HepG2 (cell line): ENCODE measurements at regions of chr5 and their contacts with region 1.

Region 1: DNA sequence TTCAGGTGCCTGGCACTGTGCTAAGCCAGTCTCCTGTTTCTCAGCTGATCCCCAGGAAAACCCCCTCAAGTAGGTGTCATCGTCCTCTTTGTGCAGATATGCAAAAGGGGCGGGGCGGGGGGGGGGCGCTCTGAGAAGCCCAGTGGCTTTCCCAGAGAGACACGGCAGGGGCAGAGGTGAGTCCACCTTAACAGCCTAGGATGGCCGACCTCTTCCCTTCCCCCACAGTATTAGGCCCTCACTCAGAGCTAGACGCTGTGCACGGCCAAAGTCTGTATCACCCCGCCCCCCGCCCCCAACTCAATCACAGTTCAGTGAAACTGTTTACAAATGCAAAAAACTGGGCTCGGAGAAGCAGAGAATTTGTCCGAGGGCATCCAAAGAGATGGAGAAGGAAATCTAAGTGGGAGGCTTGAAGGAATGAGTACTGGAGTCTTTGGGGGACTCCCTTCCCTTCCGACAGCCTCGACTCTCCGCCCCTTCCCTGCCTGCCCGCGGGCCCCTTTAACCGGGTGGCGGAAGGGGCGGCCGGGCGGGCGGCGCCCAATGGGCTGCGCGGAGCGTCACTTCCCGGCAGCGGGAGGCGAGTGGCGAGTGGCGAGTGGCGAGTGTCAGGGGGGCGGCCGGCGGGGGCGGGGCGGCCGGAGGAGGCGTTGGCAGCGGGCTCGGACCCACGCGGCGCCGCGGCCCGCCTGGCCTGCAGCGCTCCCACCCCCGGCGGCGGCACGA is at the start of gene ERGIC1:
- DNase-seq: peak; percentile 64
- ATAC-seq: peak; percentile 84
- H3K4me3 ChIP-seq: peak within 1 kb of the TSS; percentile 83 to 95 (median 86)
- H3K27ac ChIP-seq: peak within 1 kb of the TSS; percentile 90
- H3K4me1 ChIP-seq: peaks cover 71% of the 10 kb centered on the region
- H3K27me3 ChIP-seq: no peaks in the 10 kb centered on the region; a peak in 1 of 5 replicates
- CTCF ChIP-seq: no peak
- EP300 ChIP-seq: 0 out of 4 replicates have a peak, but pooled peaks have one; percentile 28 to 30
- POLR2A ChIP-seq: peak; percentile 76 to 88
- RAD21 ChIP-seq: peak; percentile 44
- total RNA-seq, gene ERGIC1: 56.6 and 78.5 TPM in 2 replicates

Region 2: GRCh38 chr5:172849606-172850453 is 16.0 kb after region 1 on chr5:
- CTCF ChIA-PET with region 1: no interaction called
- POLR2A ChIA-PET with region 1: interaction called, 7 read pairs
- in situ Hi-C with region 1: no loop called
- intact Hi-C with region 1: loop called (anchors 1 kb)
- DNase-seq: no peak
- ATAC-seq: no peak
- H3K4me3 ChIP-seq: no peak overlapping the region
- H3K27ac ChIP-seq: no peak overlapping the region
- H3K4me1 ChIP-seq: peaks cover 92% of the 10 kb centered on the region
- H3K27me3 ChIP-seq: no peaks in the 10 kb centered on the region
- CTCF ChIP-seq: no peak
- EP300 ChIP-seq: no peak
- POLR2A ChIP-seq: no peak
- RAD21 ChIP-seq: no peak